GM10248 (cell line): ENCODE measurements at regions of chr11 and their contacts with region 1.

Region 1: GRCh38 chr11:19422276-19422675 is 181.5 kb upstream of the E2F8 start:
- DNase-seq: no peak
- CTCF ChIP-seq: no peak

Region 2: DNA sequence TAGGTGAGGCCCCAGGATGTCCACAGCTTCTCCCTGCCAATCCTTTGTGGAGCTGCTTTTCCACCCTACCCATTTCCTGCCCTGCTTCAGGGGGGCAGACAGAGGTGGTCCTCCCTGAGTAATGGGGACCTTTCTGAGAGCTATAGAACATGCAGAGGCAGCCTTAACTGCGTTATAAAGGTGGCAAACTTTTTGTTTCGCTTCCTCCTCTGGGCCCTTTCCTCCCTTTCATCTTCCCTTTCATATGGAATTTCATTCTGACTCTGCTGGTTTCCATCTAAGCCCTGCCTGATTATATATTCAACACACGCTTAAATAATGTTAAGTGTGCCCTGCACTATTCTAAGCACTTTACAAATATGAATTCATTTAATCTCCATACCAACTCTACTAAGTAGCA is 12.2 kb before region 1 on chr11:
- CTCF ChIA-PET with region 1: interaction called, 13 read pairs
- POLR2A ChIA-PET with region 1: no interaction called
- DNase-seq: peak; percentile 42
- CTCF ChIP-seq: no peak

Region 3: GRCh38 chr11:19474954-19475715 is 52.9 kb after region 1 on chr11:
- CTCF ChIA-PET with region 1: no interaction called
- POLR2A ChIA-PET with region 1: no interaction called
- DNase-seq: peak; percentile 67
- CTCF ChIP-seq: no peak